HEK293 (cell line): ENCODE measurements at regions of chr10 and their contacts with region 1.

Region 1: GRCh38 chr10:76036111-76036940 is 604.9 kb downstream of the LRMDA start:
- H3K4me3 ChIP-seq: no peak overlapping the region
- H3K27ac ChIP-seq: no peak overlapping the region; the same call in 1 of the 2 replicates
- H3K4me1 ChIP-seq: peaks cover 14% of the 10 kb centered on the region
- CTCF ChIP-seq: peak; percentile 66; the same call in 1 of the 2 replicates

Region 2: DNA sequence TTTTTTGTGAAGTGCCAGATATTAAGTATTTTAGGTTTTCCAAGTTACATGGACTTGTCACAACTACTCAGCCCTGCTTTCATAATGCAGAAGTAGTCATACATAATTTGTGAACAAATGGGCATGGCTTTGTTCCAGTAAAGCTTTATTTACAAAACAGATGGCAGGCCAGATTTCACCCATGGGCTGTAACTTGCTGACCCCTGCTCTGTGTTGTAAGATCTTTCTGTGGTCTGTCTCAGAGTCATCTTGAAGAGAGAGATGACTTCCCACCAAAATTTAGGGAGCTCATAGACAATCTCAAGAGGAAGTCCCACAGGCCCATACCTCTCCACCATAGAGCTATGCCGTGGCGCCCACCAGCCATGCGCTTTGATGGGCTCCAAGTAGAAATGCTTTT is 11.2 kb after region 1 on chr10:
- CTCF ChIA-PET with region 1: interaction called, 12 read pairs
- POLR2A ChIA-PET with region 1: no interaction called
- H3K4me3 ChIP-seq: no peak overlapping the region
- H3K27ac ChIP-seq: no peak overlapping the region
- H3K4me1 ChIP-seq: no peaks in the 10 kb centered on the region
- CTCF ChIP-seq: no peak

Region 3: GRCh38 chr10:76303682-76304316 is 267.5 kb after region 1 on chr10:
- CTCF ChIA-PET with region 1: interaction called, 11 read pairs
- POLR2A ChIA-PET with region 1: interaction called, 3 read pairs
- H3K4me3 ChIP-seq: no peak overlapping the region
- H3K27ac ChIP-seq: no peak overlapping the region
- H3K4me1 ChIP-seq: peaks cover 7% of the 10 kb centered on the region
- CTCF ChIP-seq: peak; percentile 54; the same call in 1 of the 2 replicates